Activated T-helper 1 cell treated with anti-CD3 and anti-CD28 coated beads, Interleukin-12 subunit alpha, Interleukin-12 subunit beta, Interleukin-2, Interleukin-4 antibody, amounts not matched to agents 30 ng/mL and 10 ng/mL and 1 ng/mL, durations not matched to agents 14 hours and 24 hours and 36 hours (primary cell): ENCODE measurements at regions of chr10 and their contacts with region 1.

Region 1: DNA sequence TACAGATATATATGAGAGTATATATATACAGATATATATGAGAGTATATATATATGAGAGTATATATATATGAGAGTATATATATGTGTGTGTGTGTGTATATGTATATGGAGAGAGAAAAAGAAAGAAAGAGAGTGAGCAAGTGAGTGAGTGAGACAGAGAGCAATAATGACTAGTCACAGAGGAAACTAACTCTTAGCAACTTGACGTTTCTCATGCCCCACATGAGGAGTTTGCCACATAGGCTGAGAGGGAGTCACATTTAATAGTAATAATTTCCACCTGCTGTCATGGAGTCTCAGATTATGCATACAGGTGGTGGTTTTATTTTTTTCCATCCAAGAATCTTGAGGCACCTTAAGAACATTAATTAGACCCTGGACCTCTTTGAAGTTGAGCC is 199.9 kb downstream of the GATA3 start:
- DNase-seq: no peak
- H3K4me3 Mint-ChIP-seq: peak overlapping the region; percentile 38
- H3K27ac Mint-ChIP-seq: peak overlapping the region; percentile 77
- H3K4me1 Mint-ChIP-seq: peaks cover 48% of the 10 kb centered on the region
- H3K27me3 Mint-ChIP-seq: no peaks in the 10 kb centered on the region

Region 2: GRCh38 chr10:8312781-8313180 is 58.4 kb after region 1 on chr10:
- intact Hi-C with region 1: loop called (anchors 1 kb)
- DNase-seq: no peak
- H3K4me3 Mint-ChIP-seq: no peak overlapping the region
- H3K27ac Mint-ChIP-seq: peak overlapping the region; percentile 67
- H3K4me1 Mint-ChIP-seq: peaks cover 53% of the 10 kb centered on the region
- H3K27me3 Mint-ChIP-seq: no peaks in the 10 kb centered on the region